SK-N-SH (cell line): ENCODE measurements at regions of chr17 and their contacts with region 1.

Region 1: GRCh38 chr17:80913928-80914821 is 77.5 kb upstream of the CHMP6 start:
- DNase-seq: no peak
- H3K4me3 ChIP-seq: no peak overlapping the region
- H3K27ac ChIP-seq: no peak overlapping the region
- H3K4me1 ChIP-seq: no peaks in the 10 kb centered on the region
- H3K27me3 ChIP-seq: no peaks in the 10 kb centered on the region
- CTCF ChIP-seq: no peak
- EP300 ChIP-seq: no peak
- RAD21 ChIP-seq: no peak

Region 2: DNA sequence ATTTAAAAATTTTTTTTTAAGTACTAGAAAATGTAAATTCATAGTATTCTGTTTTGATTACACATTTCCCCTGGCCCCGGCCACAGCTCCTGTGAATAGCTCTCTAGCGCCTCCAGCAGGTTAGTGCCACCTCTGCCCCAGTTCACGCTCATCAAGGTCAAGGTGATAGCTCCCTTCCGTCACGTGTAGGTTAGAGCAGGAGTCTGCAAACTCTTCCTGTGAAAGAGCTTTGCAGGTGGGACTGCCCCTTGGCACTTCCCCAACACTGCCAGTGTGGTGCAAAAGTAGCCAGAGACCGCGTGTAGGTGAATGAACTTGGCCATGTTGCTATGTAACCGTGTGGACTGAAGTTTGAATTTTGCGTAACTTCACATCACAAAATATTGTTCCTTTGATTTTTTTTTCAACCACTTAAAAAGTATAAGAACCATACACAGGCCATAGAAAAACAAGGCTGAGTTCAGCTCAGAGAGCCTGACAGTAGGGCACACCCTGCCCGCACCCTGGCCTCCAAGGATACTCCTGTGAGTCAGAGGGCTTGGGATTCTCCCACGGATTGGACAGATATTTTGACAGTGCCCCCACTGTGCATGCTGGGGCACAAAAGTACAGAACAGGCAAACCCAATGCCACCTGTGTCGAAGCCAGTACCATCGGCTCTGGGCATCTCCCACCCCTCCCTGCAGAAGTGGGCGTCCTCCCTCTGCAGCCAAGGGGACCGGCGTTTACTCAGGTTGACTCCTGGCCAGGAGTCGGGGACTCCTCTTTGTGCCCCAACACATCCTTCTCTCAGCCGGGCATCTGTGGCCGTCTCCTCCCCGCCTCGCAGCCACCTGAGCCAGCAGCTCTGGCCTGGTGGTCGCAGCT is 14.5 kb before region 1 on chr17:
- CTCF ChIA-PET with region 1: interaction called, 45 read pairs
- POLR2A ChIA-PET with region 1: no interaction called
- DNase-seq: peak; percentile 87
- H3K4me3 ChIP-seq: no peak overlapping the region
- H3K27ac ChIP-seq: no peak overlapping the region
- H3K4me1 ChIP-seq: no peaks in the 10 kb centered on the region
- H3K27me3 ChIP-seq: no peaks in the 10 kb centered on the region
- CTCF ChIP-seq: peak; percentile 89
- EP300 ChIP-seq: no peak
- RAD21 ChIP-seq: peak; percentile 78

Region 3: DNA sequence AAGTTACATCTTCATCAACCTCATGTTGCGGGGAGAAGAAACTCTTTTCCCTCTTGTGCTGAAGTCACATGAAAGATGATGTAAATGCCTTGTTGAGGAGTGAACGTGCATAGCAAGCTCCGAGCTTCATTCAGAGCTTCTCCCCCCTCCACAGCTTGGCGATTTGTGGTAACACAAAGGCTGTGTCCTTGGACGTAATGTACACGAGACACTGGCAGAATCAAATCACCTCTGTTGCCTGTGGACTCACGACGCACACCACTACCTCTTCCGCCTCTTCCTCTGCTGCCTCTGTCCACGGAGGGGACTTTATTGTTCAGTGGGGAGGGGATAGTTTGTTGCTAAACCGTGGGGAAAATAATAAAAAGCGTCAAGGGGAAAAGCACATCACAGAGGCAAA is 22.5 kb after region 1 on chr17:
- CTCF ChIA-PET with region 1: no interaction called
- POLR2A ChIA-PET with region 1: no interaction called
- DNase-seq: no peak
- H3K4me3 ChIP-seq: no peak overlapping the region
- H3K27ac ChIP-seq: no peak overlapping the region
- H3K4me1 ChIP-seq: no peaks in the 10 kb centered on the region
- H3K27me3 ChIP-seq: no peaks in the 10 kb centered on the region
- CTCF ChIP-seq: no peak
- EP300 ChIP-seq: no peak
- RAD21 ChIP-seq: no peak